ENCODE measurements at regions of chr1 and their contacts with region 1.

Region 1: DNA sequence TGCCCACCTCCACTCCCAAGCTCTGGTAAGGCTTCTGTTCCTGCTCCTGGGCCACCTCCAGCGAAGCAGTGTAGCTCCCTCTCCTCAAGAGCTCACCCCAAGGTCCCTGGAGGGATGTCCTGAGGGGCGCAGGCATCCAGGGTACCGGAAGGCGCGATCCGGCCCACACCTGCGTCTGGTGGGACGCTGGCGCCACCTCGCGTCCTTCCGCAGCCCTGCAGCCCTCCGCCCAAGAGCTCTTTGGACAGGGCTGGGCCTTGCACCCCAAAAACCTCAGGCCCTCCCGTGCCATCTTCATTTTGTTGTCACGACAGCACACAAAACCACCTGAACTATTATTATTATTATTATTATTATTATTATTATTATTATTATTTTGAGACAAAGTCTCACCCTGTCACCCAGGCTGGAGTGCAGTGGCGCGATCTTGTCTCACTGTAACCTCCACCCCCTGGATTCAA is 49.2 kb upstream of the PAX7 start:
- DNase-seq: peak; percentile 30 to 77 (median 60)
- ATAC-seq: peak in 1 of 2 donors; percentile 42
- H3K4me3 ChIP-seq: no peak overlapping the region
- H3K27ac ChIP-seq: no peak overlapping the region
- H3K4me1 ChIP-seq: no peaks in the 10 kb centered on the region
- H3K27me3 ChIP-seq: no peaks in the 10 kb centered on the region

Region 2: DNA sequence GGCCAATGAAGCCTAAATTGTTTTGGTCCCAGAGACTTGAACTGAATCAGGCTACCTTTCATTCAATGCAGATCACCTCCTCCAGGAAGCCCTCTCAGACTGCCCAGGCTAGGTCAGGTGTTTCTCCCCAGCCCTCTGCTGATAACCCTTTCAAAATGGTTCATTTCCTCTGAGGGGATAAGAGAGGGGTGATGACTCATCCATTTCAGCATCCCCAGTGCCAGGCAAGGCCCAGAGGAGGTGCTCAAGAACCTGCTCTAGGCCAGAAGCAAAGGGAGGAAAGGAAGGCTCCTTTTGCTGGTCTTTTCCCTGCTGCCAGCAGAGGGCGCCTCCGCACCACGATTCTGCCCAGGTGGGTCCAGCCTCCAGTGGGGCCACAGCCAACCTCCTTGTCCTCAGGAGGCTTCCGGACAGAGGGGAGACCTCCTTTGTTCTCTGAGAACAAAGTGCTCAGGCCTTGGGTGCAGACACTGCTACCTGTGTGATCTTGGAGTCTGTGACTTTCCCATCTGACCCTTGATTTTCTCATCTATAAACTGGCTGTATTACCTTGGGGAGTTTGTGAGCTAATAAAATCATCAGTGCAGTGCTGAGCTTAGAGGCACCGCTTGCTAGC is 1087.2 kb before region 1 on chr1:
- intact Hi-C with region 1: loop called in 1 of 4 experiments (anchors 10 kb)
- DNase-seq: peak; percentile 69 to 84 (median 84)
- ATAC-seq: peak; percentile 75 to 86
- H3K4me3 ChIP-seq: no peak overlapping the region
- H3K27ac ChIP-seq: no peak overlapping the region
- H3K4me1 ChIP-seq: no peaks in the 10 kb centered on the region
- H3K27me3 ChIP-seq: no peaks in the 10 kb centered on the region

Region 3: DNA sequence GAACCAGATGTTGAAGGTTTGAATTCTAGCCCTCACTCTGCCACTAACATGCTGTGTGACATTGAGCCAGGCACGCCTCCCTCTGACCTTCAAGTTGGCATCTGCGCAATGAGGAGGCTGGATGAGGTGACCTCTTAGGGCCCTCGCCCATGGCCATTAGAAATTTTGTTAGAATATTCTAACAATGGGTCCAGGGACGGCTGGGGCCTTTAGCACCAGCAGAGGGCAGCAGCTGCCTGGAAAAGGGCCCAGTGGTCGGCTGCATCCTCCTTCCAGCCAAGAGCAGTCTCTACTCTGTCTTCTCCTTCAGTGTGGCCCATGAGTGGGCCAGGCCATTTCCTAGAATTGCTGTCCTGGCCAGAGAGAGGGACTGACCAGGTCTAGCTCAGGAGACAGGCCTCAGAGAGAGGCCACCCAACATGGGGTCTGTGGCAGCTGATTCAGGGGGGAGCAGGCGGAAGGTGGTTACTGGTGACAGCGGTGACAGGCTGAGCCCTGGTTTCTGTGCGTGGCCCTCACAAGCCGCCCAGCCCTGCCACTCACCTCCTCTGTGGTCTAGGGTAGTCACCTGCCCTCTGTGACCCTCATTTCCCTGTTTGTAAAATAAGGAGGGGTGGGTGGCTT is 927.6 kb before region 1 on chr1:
- intact Hi-C with region 1: loop called in 2 of 4 experiments (anchors 10 kb)
- DNase-seq: peak; percentile 39 to 76 (median 73)
- ATAC-seq: peak; percentile 27 to 38
- H3K4me3 ChIP-seq: no peak overlapping the region
- H3K27ac ChIP-seq: no peak overlapping the region
- H3K4me1 ChIP-seq: peaks cover 2% of the 10 kb centered on the region
- H3K27me3 ChIP-seq: no peaks in the 10 kb centered on the region

Region 4: GRCh38 chr1:18693256-18694098 is 112.0 kb after region 1 on chr1:
- intact Hi-C with region 1: no loop called
- DNase-seq: no peak
- ATAC-seq: no peak
- H3K4me3 ChIP-seq: no peak overlapping the region
- H3K27ac ChIP-seq: no peak overlapping the region
- H3K4me1 ChIP-seq: no peaks in the 10 kb centered on the region
- H3K27me3 ChIP-seq: no peaks in the 10 kb centered on the region

Region 5: DNA sequence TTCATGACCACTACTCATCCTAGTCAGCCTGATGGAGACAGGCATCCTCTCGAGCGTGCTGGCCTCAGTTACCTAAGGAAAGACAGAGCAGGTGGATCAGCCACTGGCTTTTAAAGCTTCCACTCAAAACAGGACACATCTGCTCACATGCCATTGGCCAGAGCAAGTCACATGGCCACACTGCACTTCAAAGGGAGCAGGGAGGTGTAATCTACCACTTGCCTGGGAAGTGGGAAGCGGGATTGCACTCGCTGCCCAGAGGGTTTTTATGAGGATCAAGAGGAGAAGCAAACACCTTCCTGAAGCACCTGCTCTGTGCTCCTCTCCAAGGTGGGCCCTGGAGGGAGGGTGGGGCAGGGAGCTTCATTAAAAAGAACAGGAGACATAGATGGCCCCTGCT is 170.0 kb after region 1 on chr1:
- intact Hi-C with region 1: no loop called
- DNase-seq: no peak
- ATAC-seq: no peak
- H3K4me3 ChIP-seq: no peak overlapping the region
- H3K27ac ChIP-seq: no peak overlapping the region
- H3K4me1 ChIP-seq: no peaks in the 10 kb centered on the region
- H3K27me3 ChIP-seq: no peaks in the 10 kb centered on the region